CD8-positive, alpha-beta T cell (primary cell): ENCODE measurements at regions of chr19 and their contacts with region 1.

Region 1: DNA sequence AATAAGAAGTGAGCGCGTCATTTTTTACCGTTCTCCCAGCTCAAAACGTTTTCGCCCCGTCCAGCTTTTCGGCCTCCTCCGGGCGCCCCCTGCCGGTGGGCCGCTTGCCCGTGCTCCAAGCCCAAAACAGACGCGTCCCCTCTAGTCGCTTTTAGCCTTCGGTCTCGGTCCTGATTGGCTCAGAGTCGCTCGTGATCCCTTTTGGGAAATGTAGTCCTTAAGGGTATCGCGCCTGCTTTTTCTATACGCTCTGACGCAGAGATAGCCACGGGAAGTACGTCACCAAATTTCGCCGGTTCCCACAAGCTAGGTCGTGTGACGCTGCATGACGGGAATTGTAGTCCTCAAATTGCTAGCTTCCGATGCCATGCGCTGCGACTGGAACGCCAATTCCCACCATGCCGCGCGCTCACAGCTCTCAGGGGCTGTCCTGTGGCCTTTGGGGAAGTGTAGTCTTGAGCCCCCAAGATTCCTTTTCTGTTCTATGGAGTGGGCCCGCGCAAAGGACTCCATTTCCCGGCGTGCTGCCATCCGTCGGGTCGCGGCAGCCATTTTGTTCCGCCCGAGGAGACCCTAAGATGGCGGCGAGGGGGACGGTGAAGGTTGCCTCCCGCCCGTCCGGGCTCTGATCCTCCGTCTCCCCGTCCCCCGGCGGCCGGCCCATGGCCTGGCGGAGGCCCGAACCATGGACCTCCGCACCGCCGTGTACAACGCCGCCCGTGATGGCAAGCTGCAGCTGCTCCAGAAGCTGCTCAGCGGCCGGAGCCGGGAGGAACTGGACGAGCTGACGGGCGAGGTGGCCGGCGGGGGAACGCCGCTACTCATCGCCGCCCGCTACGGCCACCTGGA is at the start of gene FEM1A:
- DNase-seq: peak; percentile 96 to 100 (median 98)
- ATAC-seq: peak; percentile 94
- H3K4me3 ChIP-seq: peak within 1 kb of the TSS; percentile 73 to 82
- H3K4me3 Mint-ChIP-seq: peak within 1 kb of the TSS; percentile 86
- H3K27ac ChIP-seq: peak within 1 kb of the TSS; percentile 81 to 93
- H3K27ac Mint-ChIP-seq: peak within 1 kb of the TSS; percentile 89
- H3K4me1 ChIP-seq: peaks cover 16% of the 10 kb centered on the region
- H3K4me1 Mint-ChIP-seq: peaks cover 33% of the 10 kb centered on the region
- H3K27me3 ChIP-seq: no peaks in the 10 kb centered on the region
- H3K27me3 Mint-ChIP-seq: no peaks in the 10 kb centered on the region
- CTCF ChIP-seq: peak; percentile 99
- total RNA-seq, gene FEM1A: 16.7 to 17.4 TPM

Region 2: DNA sequence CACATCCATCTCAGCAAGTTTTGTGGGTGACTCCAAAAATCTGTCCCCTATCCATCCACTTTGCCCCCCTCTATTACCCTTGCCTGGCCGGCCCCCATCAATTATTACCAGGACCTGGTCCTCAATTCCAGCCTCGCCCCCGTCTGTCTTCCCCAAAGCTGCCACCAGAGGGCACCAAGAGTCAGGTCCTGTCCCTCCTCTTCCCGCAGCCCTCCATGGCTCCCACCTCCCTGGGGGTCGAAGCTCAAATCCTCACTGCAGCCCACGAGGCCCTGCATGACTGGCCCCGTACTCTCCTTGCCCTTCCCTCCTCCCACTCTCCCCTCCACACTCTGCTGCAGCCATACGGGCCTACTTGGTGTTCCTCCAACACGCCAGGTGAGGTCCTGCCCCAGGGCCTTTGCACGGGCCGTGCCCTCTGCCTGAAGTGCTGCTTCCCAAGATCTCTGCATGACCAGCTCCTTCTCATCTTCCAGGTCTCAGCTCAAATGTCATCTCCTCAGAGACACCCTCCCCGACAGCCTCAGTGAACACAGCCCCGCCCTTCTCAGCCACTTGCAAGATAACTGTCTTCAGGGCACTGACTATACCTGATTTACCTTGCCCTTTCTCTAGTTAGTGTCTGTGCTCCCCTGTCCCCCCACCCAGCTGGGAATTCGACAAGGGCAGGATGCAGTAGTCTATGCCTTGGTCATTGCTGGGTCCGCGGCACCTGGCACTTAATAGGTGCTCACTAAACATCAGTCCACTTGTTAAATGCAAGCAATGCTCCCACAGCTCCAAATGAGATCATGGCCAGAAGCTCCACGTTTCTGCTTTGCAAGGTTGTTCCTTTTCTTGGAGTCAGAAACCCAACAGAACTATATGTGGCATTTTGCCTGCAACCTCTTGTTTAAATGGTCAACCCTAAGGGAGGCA is 215.1 kb before region 1 on chr19:
- CTCF ChIA-PET with region 1: interaction called, 7 read pairs
- POLR2A ChIA-PET with region 1: no interaction called
- intact Hi-C with region 1: loop called in 1 of 2 experiments (anchors 5 kb)
- DNase-seq: peak; percentile 39 to 80 (median 66)
- ATAC-seq: peak; percentile 62
- H3K4me3 ChIP-seq: no peak overlapping the region
- H3K4me3 Mint-ChIP-seq: no peak overlapping the region
- H3K27ac ChIP-seq: no peak overlapping the region
- H3K27ac Mint-ChIP-seq: no peak overlapping the region
- H3K4me1 ChIP-seq: no peaks in the 10 kb centered on the region
- H3K4me1 Mint-ChIP-seq: no peaks in the 10 kb centered on the region
- H3K27me3 ChIP-seq: peaks cover 16 to 19% of the 10 kb centered on the region in 2 experiments
- H3K27me3 Mint-ChIP-seq: peaks cover 37% of the 10 kb centered on the region
- CTCF ChIP-seq: peak; percentile 19

Region 3: GRCh38 chr19:4669723-4670480 is 121.5 kb before region 1 on chr19 and contains the start of gene MYDGF:
- CTCF ChIA-PET with region 1: no interaction called
- POLR2A ChIA-PET with region 1: no interaction called
- intact Hi-C with region 1: loop called in 1 of 2 experiments (anchors 1 kb)
- DNase-seq: peak; percentile 87 to 96 (median 92)
- ATAC-seq: peak; percentile 98
- H3K4me3 ChIP-seq: peak within 1 kb of the TSS; percentile 75 to 84
- H3K4me3 Mint-ChIP-seq: peak within 1 kb of the TSS; percentile 88
- H3K27ac ChIP-seq: peak within 1 kb of the TSS; percentile 58 to 71
- H3K27ac Mint-ChIP-seq: peak within 1 kb of the TSS; percentile 90
- H3K4me1 ChIP-seq: peaks cover 12% of the 10 kb centered on the region
- H3K4me1 Mint-ChIP-seq: peaks cover 18% of the 10 kb centered on the region
- H3K27me3 ChIP-seq: no peaks in the 10 kb centered on the region
- H3K27me3 Mint-ChIP-seq: no peaks in the 10 kb centered on the region
- CTCF ChIP-seq: no peak
- total RNA-seq, gene MYDGF: 30.1 to 30.3 TPM

Region 4: DNA sequence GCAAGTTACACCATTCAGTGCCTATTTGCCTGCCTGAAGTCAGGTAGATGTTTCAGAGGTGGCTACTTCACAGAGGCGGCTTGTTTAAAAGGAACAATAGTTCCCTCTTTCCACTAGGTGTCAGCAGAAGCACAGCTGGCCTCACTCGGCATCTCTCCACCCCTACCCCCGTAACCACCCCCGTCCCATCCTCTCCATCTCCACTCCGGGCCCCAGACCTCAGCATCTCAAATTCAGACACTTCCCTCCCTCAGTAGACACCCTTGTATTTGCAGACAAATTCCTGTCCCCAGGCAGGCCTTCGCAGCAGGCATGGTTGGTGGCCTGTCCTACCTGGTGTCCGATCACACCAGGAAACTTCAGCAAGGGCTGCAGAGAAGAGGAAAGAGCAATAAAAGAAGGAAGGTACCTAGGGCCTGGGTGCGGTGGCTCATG is 58.7 kb before region 1 on chr19:
- CTCF ChIA-PET with region 1: interaction called, 68 read pairs
- POLR2A ChIA-PET with region 1: interaction called, 11 read pairs
- intact Hi-C with region 1: loop called (anchors 1 kb)
- DNase-seq: peak; percentile 12 to 80 (median 47)
- ATAC-seq: peak; percentile 90
- H3K4me3 ChIP-seq: peak overlapping the region in 1 of 2 experiments; percentile 27
- H3K4me3 Mint-ChIP-seq: no peak overlapping the region
- H3K27ac ChIP-seq: no peak overlapping the region
- H3K27ac Mint-ChIP-seq: no peak overlapping the region
- H3K4me1 ChIP-seq: peaks cover 5% of the 10 kb centered on the region
- H3K4me1 Mint-ChIP-seq: peaks cover 4% of the 10 kb centered on the region
- H3K27me3 ChIP-seq: no peaks in the 10 kb centered on the region
- H3K27me3 Mint-ChIP-seq: peaks cover 9% of the 10 kb centered on the region
- CTCF ChIP-seq: peak; percentile 69

Region 5: GRCh38 chr19:4768934-4769777 is 22.2 kb before region 1 on chr19:
- CTCF ChIA-PET with region 1: interaction called, 3 read pairs
- POLR2A ChIA-PET with region 1: no interaction called
- intact Hi-C with region 1: loop called in 1 of 2 experiments (anchors 1 kb)
- DNase-seq: peak; percentile 61 to 89 (median 80)
- ATAC-seq: peak; percentile 99
- H3K4me3 ChIP-seq: no peak overlapping the region
- H3K4me3 Mint-ChIP-seq: no peak overlapping the region
- H3K27ac ChIP-seq: no peak overlapping the region
- H3K27ac Mint-ChIP-seq: no peak overlapping the region
- H3K4me1 ChIP-seq: no peaks in the 10 kb centered on the region
- H3K4me1 Mint-ChIP-seq: peaks cover 3% of the 10 kb centered on the region
- H3K27me3 ChIP-seq: peaks cover 0 to 8% of the 10 kb centered on the region in 2 experiments
- H3K27me3 Mint-ChIP-seq: peaks cover 26% of the 10 kb centered on the region
- CTCF ChIP-seq: no peak

Region 6: DNA sequence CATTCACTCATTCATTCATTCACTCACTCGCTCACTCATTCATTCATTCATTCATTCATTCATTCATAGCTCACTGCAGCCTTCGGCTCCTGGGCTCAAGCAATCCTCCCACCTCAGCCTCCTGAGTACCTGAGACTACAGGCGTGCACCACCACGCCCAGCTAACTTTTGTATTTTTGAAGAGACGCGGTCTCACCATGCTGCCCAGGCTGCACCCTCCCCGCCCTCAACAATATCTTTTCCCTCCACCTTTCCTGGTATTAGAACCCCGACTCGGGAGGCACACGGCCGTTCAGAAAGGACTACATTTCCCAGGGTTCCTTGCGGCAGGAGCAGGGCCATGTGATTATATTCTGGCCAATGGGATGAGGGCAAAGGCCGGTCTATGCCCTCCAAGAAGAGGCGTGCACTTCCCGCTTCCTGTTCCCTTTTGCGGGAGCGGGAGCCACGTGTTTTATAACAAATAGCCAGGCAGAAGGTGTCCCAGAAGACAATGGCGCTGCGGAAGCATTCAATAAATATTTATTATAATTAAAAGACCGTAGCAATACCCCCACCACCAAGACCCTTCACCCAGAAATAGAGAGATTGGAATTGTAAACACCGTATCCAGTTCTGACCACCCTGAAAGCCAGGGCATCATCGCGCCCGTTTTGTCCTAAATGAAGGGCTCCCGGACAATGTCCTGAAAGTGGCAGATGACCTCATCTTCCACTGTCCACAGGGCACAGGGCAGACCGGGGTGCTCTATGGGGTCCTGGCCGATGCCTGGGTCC is 24.2 kb after region 1 on chr19:
- CTCF ChIA-PET with region 1: interaction called, 41 read pairs
- POLR2A ChIA-PET with region 1: no interaction called
- intact Hi-C with region 1: no loop called
- DNase-seq: peak; percentile 45 to 89 (median 74)
- ATAC-seq: peak; percentile 83
- H3K4me3 ChIP-seq: peak overlapping the region; percentile 36
- H3K4me3 Mint-ChIP-seq: peak overlapping the region; percentile 69
- H3K27ac ChIP-seq: peak overlapping the region in 1 of 2 experiments; percentile 36
- H3K27ac Mint-ChIP-seq: peak overlapping the region; percentile 16
- H3K4me1 ChIP-seq: peaks cover 8% of the 10 kb centered on the region
- H3K4me1 Mint-ChIP-seq: peaks cover 11% of the 10 kb centered on the region
- H3K27me3 ChIP-seq: no peaks in the 10 kb centered on the region
- H3K27me3 Mint-ChIP-seq: no peaks in the 10 kb centered on the region
- CTCF ChIP-seq: no peak

Region 7: GRCh38 chr19:4916292-4917082 is 125.1 kb after region 1 on chr19:
- CTCF ChIA-PET with region 1: interaction called, 5 read pairs
- POLR2A ChIA-PET with region 1: interaction called, 10 read pairs
- intact Hi-C with region 1: loop called in 1 of 2 experiments (anchors 5 kb)
- DNase-seq: peak; percentile 19 to 82 (median 64)
- ATAC-seq: peak; percentile 30
- H3K4me3 ChIP-seq: peak overlapping the region; percentile 96 to 100
- H3K4me3 Mint-ChIP-seq: peak overlapping the region; percentile 99
- H3K27ac ChIP-seq: peak overlapping the region; percentile 90 to 96
- H3K27ac Mint-ChIP-seq: peak overlapping the region; percentile 100
- H3K4me1 ChIP-seq: peaks cover 34% of the 10 kb centered on the region
- H3K4me1 Mint-ChIP-seq: peaks cover 41% of the 10 kb centered on the region
- H3K27me3 ChIP-seq: no peaks in the 10 kb centered on the region
- H3K27me3 Mint-ChIP-seq: no peaks in the 10 kb centered on the region
- CTCF ChIP-seq: no peak

Region 8: DNA sequence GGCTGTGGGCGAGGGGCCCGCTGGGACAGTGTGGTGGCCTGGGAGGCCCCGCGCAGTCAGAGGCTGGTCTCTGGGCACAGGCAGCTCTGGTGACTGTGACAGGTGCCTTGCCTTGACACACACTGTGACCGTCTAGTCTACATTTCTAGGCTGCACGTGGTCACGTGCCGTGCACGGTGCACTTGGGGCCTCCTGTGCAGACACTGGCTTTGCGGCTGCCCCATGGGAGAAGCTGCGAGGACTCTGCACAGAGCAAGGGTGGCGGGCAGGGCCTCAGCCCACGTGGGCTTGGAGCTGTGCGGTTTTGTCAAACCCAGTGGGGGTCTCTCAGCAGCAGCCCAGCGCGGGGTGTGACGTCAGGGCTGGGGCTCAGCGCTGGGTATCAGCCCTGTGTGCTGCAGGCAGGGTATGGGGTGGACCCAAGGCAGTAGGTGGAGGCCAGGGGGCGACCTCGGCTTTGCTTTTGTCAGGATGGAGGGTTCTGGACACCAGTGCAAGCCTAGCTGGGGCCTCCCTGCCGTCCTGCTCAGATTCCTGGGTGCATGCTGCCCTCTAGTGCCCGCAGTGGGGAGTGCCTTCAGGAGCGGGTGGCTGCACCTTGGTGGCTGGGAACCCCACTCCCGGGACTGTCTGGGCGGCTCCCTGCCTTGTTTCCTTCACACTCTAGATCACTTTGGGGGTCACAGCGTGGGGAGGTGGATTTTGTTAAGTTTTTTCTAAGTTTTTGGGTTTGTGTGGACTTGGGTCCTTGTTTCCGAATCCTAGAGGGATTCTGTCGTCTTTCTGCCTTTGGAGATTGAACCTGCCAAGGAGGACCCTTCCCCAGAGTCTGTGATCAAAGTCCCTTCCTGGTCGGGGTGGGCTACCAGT is 240.1 kb after region 1 on chr19:
- CTCF ChIA-PET with region 1: no interaction called
- POLR2A ChIA-PET with region 1: no interaction called
- intact Hi-C with region 1: no loop called
- DNase-seq: peak; percentile 70 to 92 (median 81)
- ATAC-seq: peak; percentile 87
- H3K4me3 ChIP-seq: no peak overlapping the region
- H3K4me3 Mint-ChIP-seq: no peak overlapping the region
- H3K27ac ChIP-seq: no peak overlapping the region
- H3K27ac Mint-ChIP-seq: no peak overlapping the region
- H3K4me1 ChIP-seq: peaks cover 7% of the 10 kb centered on the region
- H3K4me1 Mint-ChIP-seq: peaks cover 8% of the 10 kb centered on the region
- H3K27me3 ChIP-seq: no peaks in the 10 kb centered on the region
- H3K27me3 Mint-ChIP-seq: no peaks in the 10 kb centered on the region
- CTCF ChIP-seq: peak; percentile 88

Region 9: DNA sequence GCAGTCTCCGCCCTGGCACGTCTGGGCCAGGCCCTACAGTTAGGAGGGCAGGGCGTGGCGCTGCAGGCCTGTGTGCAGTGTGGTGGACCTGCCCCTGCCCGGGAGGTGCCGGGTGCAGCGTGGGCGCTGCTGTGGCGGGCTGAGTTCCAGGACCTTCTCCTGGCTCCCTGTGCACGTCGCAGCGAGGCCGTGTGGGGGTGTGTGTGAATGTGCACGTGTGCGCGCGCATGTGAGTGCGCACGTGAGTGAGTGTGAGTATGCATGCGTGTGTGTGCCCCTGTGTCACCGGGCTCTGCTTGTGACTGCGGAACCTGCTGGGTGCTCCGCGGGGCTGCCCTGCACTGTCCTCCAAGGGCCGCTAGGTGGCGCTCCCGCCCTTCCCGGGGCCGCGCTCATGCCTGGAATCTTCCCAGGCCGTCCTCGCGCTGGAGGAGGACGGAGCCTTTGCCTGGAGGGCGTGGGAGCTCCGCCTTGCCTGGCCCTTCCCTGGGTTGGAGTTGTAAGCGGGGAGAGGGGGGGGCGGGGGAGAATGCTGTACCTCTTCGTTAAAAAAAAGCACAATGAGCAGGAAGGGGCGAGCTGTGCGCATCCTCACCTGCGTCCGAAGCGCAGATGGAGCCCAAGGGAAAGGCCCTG is 256.8 kb after region 1 on chr19:
- CTCF ChIA-PET with region 1: no interaction called
- POLR2A ChIA-PET with region 1: no interaction called
- intact Hi-C with region 1: no loop called
- DNase-seq: peak; percentile 30 to 79 (median 52)
- ATAC-seq: peak; percentile 88
- H3K4me3 ChIP-seq: no peak overlapping the region
- H3K4me3 Mint-ChIP-seq: no peak overlapping the region
- H3K27ac ChIP-seq: no peak overlapping the region
- H3K27ac Mint-ChIP-seq: no peak overlapping the region
- H3K4me1 ChIP-seq: peaks cover 5% of the 10 kb centered on the region
- H3K4me1 Mint-ChIP-seq: peaks cover 3% of the 10 kb centered on the region
- H3K27me3 ChIP-seq: no peaks in the 10 kb centered on the region
- H3K27me3 Mint-ChIP-seq: no peaks in the 10 kb centered on the region
- CTCF ChIP-seq: peak; percentile 92

Region 10: DNA sequence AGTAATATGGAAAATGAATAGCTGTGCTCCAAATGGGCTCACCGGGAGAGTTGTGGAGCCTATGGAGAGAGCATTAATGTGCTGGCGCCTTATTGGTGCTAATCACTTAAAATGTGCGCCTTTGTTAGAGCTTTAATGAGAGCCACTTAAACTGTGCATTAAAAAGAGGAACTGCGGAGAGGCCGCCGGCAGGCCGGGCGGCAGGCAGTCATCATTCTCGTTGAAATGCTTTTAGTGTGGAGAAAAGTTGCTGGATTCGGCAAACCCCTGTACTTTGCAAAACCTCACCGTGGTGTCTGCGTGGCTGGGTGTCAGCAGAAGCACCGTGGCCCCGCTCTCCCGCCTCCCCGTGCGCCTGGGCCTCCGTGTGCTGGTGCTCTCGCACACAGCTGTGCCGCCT is 283.0 kb after region 1 on chr19:
- CTCF ChIA-PET with region 1: no interaction called
- POLR2A ChIA-PET with region 1: no interaction called
- intact Hi-C with region 1: no loop called
- DNase-seq: no peak
- ATAC-seq: no peak
- H3K4me3 ChIP-seq: no peak overlapping the region
- H3K4me3 Mint-ChIP-seq: peak overlapping the region; percentile 3
- H3K27ac ChIP-seq: no peak overlapping the region
- H3K27ac Mint-ChIP-seq: no peak overlapping the region
- H3K4me1 ChIP-seq: peaks cover 19% of the 10 kb centered on the region
- H3K4me1 Mint-ChIP-seq: peaks cover 36% of the 10 kb centered on the region
- H3K27me3 ChIP-seq: no peaks in the 10 kb centered on the region
- H3K27me3 Mint-ChIP-seq: no peaks in the 10 kb centered on the region
- CTCF ChIP-seq: no peak

Region 11: GRCh38 chr19:5585461-5586299 is 794.3 kb after region 1 on chr19:
- CTCF ChIA-PET with region 1: no interaction called
- POLR2A ChIA-PET with region 1: no interaction called
- intact Hi-C with region 1: no loop called
- DNase-seq: peak in 6 of 9 experiments; percentile 18 to 67 (median 52)
- ATAC-seq: peak; percentile 61
- H3K4me3 ChIP-seq: no peak overlapping the region
- H3K4me3 Mint-ChIP-seq: peak overlapping the region; percentile 59
- H3K27ac ChIP-seq: no peak overlapping the region
- H3K27ac Mint-ChIP-seq: peak overlapping the region; percentile 67
- H3K4me1 ChIP-seq: peaks cover 12% of the 10 kb centered on the region
- H3K4me1 Mint-ChIP-seq: peaks cover 14% of the 10 kb centered on the region
- H3K27me3 ChIP-seq: no peaks in the 10 kb centered on the region
- H3K27me3 Mint-ChIP-seq: no peaks in the 10 kb centered on the region
- CTCF ChIP-seq: no peak